Activated CD4-positive, alpha-beta T cell treated with anti-CD3 and anti-CD28 coated beads for 36 hours (primary cell): ENCODE measurements at regions of chr5 and their contacts with region 1.

Region 1: GRCh38 chr5:32585446-32586275 is at the start of gene SUB1:
- DNase-seq: peak; percentile 96
- ATAC-seq: peak; percentile 87
- H3K4me3 Mint-ChIP-seq: peak within 1 kb of the TSS; percentile 93
- H3K27ac Mint-ChIP-seq: peak within 1 kb of the TSS; percentile 99
- H3K4me1 Mint-ChIP-seq: peaks cover 60% of the 10 kb centered on the region
- H3K27me3 Mint-ChIP-seq: no peaks in the 10 kb centered on the region
- total RNA-seq, gene SUB1: 418 to 458 TPM

Region 2: DNA sequence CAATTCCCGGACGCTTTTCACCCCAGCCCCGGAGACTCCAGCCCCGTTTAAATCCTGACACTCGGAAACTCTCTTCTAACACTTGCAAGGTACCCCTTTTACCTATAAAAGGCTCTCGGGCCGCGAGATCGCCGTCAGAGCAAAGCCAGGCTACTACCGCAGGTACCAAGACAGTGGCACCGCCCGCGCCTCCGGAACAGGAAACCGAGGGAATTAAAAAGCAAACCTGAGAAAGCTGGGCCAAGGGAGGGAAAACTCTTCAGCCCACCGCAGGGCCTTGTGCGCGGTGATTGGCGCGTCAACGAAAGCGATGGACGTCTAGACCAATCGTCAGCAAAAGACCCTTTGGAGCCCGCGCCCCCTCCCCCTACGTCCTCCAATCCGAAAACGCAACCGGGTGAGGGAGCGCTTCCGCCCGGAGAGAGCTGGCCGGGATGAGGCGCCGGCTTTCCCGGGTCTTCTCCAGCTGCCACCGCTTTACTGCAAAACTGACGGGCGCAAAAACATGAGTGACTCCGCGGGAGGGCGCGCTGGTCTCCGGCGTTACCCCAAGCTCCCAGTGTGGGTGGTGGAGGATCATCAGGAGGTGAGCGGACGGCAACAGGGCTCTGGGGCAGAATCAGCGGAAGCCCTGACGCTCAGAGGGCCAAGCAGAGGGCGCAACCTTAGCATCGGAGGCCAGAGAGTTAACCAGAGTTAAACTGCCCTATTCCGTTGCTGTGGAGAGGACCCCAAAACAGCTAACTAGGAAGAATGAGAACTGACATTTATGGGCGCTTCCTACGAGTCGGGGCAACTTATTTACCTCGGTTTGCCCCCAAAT is 1053.6 kb before region 1 on chr5 and contains the starts of genes C5orf22 and DROSHA:
- CTCF ChIA-PET with region 1: no interaction called
- POLR2A ChIA-PET with region 1: no interaction called
- intact Hi-C with region 1: loop called in 1 of 2 experiments (anchors 5 kb)
- DNase-seq: peak; percentile 96
- ATAC-seq: peak; percentile 97
- H3K4me3 Mint-ChIP-seq: peak within 1 kb of the TSS; percentile 82
- H3K27ac Mint-ChIP-seq: peak within 1 kb of the TSS; percentile 80
- H3K4me1 Mint-ChIP-seq: peaks cover 39% of the 10 kb centered on the region
- H3K27me3 Mint-ChIP-seq: no peaks in the 10 kb centered on the region
- total RNA-seq, gene C5orf22: 25.2 to 30.6 TPM
- total RNA-seq, gene DROSHA: 84.3 to 94.4 TPM

Region 3: GRCh38 chr5:32232441-32233219 is 353.0 kb before region 1 on chr5:
- CTCF ChIA-PET with region 1: interaction called, 17 read pairs
- POLR2A ChIA-PET with region 1: no interaction called
- intact Hi-C with region 1: loop called in 1 of 2 experiments (anchors 1 kb)
- DNase-seq: peak; percentile 90
- ATAC-seq: peak; percentile 95
- H3K4me3 Mint-ChIP-seq: no peak overlapping the region
- H3K27ac Mint-ChIP-seq: peak overlapping the region; percentile 56
- H3K4me1 Mint-ChIP-seq: no peaks in the 10 kb centered on the region
- H3K27me3 Mint-ChIP-seq: no peaks in the 10 kb centered on the region

Region 4: DNA sequence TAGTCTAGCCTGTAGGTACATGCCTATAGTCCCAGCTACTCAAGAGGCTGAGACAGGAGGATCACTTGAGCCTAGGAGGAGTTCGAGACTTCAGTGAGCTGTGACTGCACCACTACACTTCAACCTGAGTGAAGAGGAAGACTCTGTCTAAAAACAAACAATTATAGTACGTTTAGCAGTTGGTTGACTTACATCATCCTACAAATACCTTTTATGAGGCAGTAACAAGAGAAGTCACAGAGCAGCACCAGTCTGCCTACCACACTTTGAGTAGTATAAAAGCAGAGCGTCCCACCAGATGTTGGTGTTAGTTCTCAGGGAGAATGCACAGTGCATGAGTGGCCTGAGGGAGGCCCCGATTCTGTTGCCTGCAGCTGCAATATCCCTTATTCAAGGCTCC is 157.2 kb before region 1 on chr5:
- CTCF ChIA-PET with region 1: interaction called, 11 read pairs
- POLR2A ChIA-PET with region 1: no interaction called
- intact Hi-C with region 1: loop called in 1 of 2 experiments (anchors 5 kb)
- DNase-seq: no peak
- ATAC-seq: no peak
- H3K4me3 Mint-ChIP-seq: no peak overlapping the region
- H3K27ac Mint-ChIP-seq: no peak overlapping the region
- H3K4me1 Mint-ChIP-seq: peaks cover 50% of the 10 kb centered on the region
- H3K27me3 Mint-ChIP-seq: no peaks in the 10 kb centered on the region

Region 5: GRCh38 chr5:32471784-32472183 is 113.9 kb before region 1 on chr5:
- CTCF ChIA-PET with region 1: no interaction called
- POLR2A ChIA-PET with region 1: no interaction called
- intact Hi-C with region 1: no loop called
- DNase-seq: no peak
- ATAC-seq: no peak
- H3K4me3 Mint-ChIP-seq: no peak overlapping the region
- H3K27ac Mint-ChIP-seq: no peak overlapping the region
- H3K4me1 Mint-ChIP-seq: no peaks in the 10 kb centered on the region
- H3K27me3 Mint-ChIP-seq: no peaks in the 10 kb centered on the region

Region 6: GRCh38 chr5:32504989-32505596 is 80.6 kb before region 1 on chr5:
- CTCF ChIA-PET with region 1: interaction called, 34 read pairs
- POLR2A ChIA-PET with region 1: interaction called, 3 read pairs
- intact Hi-C with region 1: no loop called
- DNase-seq: peak; percentile 13
- ATAC-seq: peak; percentile 9
- H3K4me3 Mint-ChIP-seq: no peak overlapping the region
- H3K27ac Mint-ChIP-seq: peak overlapping the region; percentile 25
- H3K4me1 Mint-ChIP-seq: peaks cover 16% of the 10 kb centered on the region
- H3K27me3 Mint-ChIP-seq: peaks cover 6% of the 10 kb centered on the region

Region 7: GRCh38 chr5:32600057-32600622 is 14.5 kb after region 1 on chr5:
- CTCF ChIA-PET with region 1: interaction called, 27 read pairs
- POLR2A ChIA-PET with region 1: interaction called, 5 read pairs
- intact Hi-C with region 1: no loop called
- DNase-seq: no peak
- ATAC-seq: no peak
- H3K4me3 Mint-ChIP-seq: no peak overlapping the region
- H3K27ac Mint-ChIP-seq: no peak overlapping the region
- H3K4me1 Mint-ChIP-seq: peaks cover 53% of the 10 kb centered on the region
- H3K27me3 Mint-ChIP-seq: no peaks in the 10 kb centered on the region